ENCODE measurements at regions of chr6 and their contacts with region 1.

Region 1: GRCh38 chr6:145734486-145735355 is 599 bp downstream of the EPM2A start:
- DNase-seq: peak; percentile 95
- ATAC-seq: peak; percentile 93

Region 2: DNA sequence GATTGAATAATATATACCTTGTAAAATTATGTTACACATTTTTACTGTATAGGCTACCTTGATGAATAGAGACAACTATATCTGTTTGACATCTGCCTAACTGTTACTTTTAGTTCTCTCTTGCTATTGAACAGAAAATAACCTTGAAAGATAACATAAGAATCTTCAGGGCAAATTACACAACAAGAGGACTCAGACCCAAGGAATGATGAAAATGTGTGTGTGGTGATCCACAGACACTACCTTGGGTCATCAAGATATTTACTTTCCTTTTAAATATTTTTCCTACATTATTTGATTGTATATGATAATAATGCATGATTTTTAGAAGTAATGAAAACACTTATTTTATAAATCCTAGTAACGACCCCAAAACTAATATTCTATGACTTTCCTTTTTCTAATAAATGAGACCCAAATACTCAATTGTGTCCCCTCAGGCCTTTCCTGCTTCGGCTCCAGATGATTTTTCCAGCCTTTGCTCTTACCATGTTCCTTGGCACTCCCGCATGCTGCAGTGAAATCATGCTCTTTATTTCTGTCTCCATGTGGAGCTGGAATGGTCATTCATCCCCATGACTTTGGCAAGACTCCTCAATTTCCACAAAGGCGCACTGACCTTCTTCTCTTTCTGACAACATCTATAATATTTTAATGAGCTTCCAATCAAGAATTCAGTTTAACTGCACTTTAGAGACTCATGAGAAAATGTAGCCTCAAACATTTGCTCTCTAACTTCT is 187.0 kb before region 1 on chr6:
- intact Hi-C with region 1: no loop called
- DNase-seq: no peak
- ATAC-seq: no peak

Region 3: GRCh38 chr6:145789443-145789842 is 54.7 kb after region 1 on chr6:
- intact Hi-C with region 1: no loop called
- DNase-seq: no peak
- ATAC-seq: no peak

Region 4: DNA sequence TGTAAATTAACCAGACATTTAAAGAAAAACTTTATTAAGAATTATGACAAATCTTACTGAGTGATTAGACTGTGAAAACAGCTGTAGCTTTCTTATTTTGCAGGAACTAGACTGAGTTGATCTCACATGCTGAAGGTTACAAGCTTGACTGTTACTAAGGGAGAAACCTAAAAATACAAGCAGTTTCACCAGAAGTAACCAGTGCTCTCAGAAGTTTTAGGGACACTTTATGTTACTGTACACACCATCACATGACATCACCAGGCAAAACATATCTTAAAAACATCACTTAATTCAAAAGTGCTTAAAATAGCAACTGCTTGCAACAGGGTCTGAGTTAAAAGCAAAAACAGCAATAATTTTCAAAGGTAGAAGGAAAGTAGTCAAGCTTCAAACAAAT is 74.5 kb after region 1 on chr6:
- intact Hi-C with region 1: no loop called
- DNase-seq: no peak
- ATAC-seq: no peak

Region 5: GRCh38 chr6:145887969-145888368 is 153.2 kb after region 1 on chr6:
- intact Hi-C with region 1: loop called (anchors 10 kb)
- DNase-seq: no peak
- ATAC-seq: no peak